Ascending aorta (tissue), 2 donors: ENCODE measurements at regions of chr19 and their contacts with region 1.

Region 1: GRCh38 chr19:46759817-46760333 is 13.6 kb upstream of the STRN4 start:
- DNase-seq: peak in 1 of 2 donors; percentile 73
- H3K4me3 ChIP-seq: no peak overlapping the region
- H3K27ac ChIP-seq: no peak overlapping the region
- H3K4me1 ChIP-seq: no peaks in the 10 kb centered on the region
- H3K27me3 ChIP-seq: no peaks in the 10 kb centered on the region
- CTCF ChIP-seq: no peak

Region 2: DNA sequence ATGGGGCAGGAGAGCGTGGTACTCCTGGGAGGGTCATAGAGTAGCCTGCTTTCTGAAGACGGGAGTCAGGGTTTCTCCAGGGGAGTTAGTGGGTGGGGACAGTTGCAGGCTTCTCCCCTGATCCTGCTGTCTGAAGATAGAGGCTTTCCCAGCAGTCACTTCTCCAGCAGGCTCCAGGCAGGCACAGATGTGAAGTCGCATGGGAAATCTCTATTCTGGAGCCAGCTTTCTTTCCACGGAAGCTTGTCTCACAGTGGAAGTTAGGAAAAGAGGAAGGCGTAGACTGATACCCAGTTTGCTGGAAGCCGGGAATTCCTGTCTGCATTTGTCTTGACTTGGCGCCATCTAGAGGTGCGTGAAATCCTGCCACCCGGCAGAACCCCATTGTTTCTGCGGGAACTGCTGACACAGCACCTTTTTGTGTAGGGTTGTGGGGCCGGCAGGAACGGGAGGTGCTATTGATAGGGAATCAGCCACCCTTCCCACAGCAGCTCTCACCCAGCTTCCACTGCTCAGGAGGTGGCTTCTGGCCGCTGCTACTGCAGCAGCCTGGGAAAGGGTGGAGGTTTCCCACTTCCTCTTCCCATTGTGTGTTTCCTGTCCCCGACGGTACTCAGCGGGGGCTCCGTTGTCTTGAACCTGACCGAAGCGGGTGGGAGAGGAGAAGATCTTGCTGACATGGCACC is 231.3 kb after region 1 on chr19:
- intact Hi-C with region 1: loop called (anchors 5 kb)
- DNase-seq: peak; percentile 47 to 91
- H3K4me3 ChIP-seq: no peak overlapping the region
- H3K27ac ChIP-seq: peak overlapping the region; percentile 60 to 73
- H3K4me1 ChIP-seq: peaks cover 2 to 7% of the 10 kb centered on the region in 2 donors
- H3K27me3 ChIP-seq: no peaks in the 10 kb centered on the region
- CTCF ChIP-seq: peak; percentile 80 to 91 (median 82)